Cardiac septum (tissue), 1 donor: ENCODE measurements at regions of chr14 and their contacts with region 1.

Region 1: DNA sequence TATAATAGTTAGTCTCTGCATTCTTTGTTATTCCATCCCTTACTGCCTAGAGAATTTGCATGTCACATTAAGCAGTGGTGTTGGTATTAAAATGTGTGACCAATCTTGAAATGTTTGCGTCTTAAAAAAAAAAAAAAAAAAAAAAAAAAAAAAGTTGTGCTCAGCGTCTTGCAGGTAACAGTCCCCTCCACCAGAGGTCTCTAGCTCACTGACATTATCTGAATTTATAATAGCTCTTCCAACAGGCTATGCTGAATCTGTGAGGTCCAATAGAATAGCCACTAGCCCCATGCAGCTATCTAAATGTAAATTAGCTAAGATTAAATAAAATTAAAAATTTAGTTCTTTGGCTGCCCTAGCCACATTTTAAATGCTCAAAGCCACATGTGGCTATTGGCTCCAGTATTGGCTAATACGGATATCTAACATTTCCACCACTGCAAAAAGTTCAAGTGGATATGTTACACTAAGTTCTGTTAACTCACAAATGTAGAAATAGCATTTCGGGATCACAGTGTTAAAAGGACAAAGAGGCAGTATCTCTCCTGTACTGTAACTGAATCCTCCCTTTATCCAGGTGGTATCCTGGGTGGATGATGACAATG is 28.7 kb downstream of the NKX2-8 start:
- DNase-seq: no peak

Region 2: GRCh38 chr14:36070031-36070719 is 483.6 kb before region 1 on chr14:
- intact Hi-C with region 1: loop called (anchors 5 kb)
- DNase-seq: no peak

Region 3: DNA sequence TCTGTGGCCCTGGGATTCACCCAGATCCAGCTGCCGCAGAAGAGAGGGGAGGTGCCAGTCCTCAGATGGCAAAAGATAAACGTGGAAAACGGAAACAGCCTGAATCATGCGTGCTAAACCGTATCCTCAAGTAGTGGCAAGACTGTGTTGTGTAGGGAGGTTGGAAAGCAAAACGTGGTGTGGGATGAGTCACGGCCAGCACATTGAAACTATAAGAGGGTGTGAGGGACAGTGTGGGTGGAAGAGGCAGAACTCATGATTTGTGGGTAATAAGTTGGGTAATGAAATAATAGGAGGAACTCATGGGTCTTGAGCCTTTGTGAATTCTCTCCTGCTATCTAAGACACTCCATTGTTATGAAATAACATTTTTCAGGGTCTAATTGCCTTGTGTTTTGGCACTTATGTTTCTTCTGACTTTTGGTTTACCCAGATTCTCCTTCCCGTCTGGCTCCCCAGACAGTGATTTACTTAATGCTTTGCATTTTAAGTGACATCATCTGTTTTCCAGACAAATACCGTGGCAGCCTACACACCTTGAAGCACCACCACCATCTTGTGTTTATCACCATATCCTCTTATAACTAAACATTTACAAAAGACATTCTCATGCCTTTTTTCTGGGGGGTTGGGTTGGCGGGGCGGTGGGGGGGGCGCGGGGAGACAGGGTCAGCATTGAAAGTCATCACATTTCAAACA is 314.9 kb before region 1 on chr14:
- intact Hi-C with region 1: no loop called
- DNase-seq: no peak

Region 4: GRCh38 chr14:36604757-36605505 is 51.2 kb after region 1 on chr14:
- intact Hi-C with region 1: loop called (anchors 10 kb)
- DNase-seq: no peak

Region 5: GRCh38 chr14:36805131-36805559 is 251.4 kb after region 1 on chr14:
- intact Hi-C with region 1: no loop called
- DNase-seq: no peak

Region 6: GRCh38 chr14:36941783-36942521 is 388.2 kb after region 1 on chr14:
- intact Hi-C with region 1: loop called (anchors 5 kb)
- DNase-seq: peak; percentile 78